HEK293 (cell line): ENCODE measurements at regions of chr2 and their contacts with region 1.

Region 1: DNA sequence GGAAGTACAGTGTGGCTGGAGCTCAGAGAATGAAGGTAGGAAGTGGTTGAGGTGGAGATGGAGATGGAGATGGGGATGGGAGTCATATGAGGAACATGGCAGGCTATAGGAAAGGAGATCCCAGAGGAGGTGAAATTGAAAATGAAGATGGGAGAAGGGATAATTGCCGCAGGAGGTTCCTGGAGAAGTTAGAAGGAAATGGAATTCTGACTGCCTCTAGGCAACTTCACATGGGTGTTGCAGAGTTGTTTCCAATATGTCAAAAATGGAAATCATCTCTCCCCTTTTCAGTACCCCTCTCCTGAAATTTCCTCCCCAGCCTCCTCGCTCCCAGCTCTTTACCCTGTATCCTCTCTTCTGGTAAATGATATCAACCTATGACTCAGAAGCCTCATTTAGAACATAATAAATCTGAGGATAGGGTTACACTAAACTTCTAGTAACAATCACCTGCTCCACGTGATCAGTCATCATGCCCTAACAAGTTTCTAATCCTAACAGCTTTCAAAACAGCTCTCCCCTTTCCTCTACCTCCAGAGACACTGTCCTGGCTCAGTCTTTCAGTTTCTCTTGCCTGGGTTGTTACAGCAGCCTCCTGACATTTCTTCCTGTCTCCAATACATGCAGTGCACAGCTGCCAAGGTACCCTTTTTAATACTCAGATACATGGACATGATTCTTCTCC is 201.9 kb upstream of the RBMS1 start:
- H3K4me3 ChIP-seq: no peak overlapping the region
- H3K27ac ChIP-seq: peak overlapping the region; percentile 48; the same call in 1 of the 2 replicates
- H3K4me1 ChIP-seq: no peaks in the 10 kb centered on the region; the same call in 1 of the 2 replicates
- CTCF ChIP-seq: no peak

Region 2: GRCh38 chr2:160664603-160665140 is 30.9 kb before region 1 on chr2:
- CTCF ChIA-PET with region 1: interaction called, 10 read pairs
- POLR2A ChIA-PET with region 1: no interaction called
- H3K4me3 ChIP-seq: no peak overlapping the region
- H3K27ac ChIP-seq: no peak overlapping the region
- H3K4me1 ChIP-seq: peaks cover 8% of the 10 kb centered on the region; the same call in 1 of the 2 replicates
- CTCF ChIP-seq: no peak

Region 3: DNA sequence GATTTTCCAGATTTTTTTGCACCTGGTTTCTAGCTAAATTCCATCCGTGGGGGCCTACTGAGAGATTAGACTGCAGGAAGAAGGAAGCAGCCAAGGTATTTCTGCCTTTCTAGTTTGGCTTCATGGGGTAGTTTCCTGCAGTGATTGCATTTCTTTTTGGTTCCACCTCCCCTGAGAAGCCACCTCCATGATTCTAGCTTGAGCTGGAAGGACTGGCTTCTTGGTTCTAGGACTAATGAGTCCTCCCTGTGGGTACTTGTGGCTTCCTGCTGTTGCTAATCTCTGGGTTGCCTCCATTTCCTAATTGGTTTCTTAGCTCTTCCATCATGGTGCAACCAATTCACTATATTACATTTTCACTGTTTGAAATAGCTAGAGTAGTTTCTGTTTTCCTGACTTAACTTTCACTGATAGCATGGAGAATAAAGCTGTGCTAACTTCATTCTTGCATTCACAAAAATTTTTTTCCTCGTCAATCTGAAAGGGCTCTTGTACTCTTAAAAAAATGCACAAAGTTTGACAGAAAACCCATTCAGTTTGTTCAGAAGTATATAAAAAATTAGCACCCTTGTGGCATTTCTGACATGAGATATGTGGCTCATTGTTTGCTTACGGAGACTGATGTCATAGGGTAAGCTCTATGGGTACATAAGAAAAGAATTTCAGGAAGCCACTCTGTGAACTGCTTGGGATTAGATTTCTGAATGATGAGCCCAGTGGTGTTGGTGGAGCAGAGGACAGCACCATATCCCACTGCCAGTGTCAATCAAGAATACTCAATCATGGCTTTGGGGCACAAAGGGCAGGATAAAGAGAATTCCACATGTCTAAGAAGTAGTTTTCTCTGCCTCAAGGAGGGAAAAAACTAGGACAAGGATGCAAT is 40.8 kb after region 1 on chr2:
- CTCF ChIA-PET with region 1: no interaction called
- POLR2A ChIA-PET with region 1: no interaction called
- H3K4me3 ChIP-seq: no peak overlapping the region
- H3K27ac ChIP-seq: no peak overlapping the region
- H3K4me1 ChIP-seq: no peaks in the 10 kb centered on the region; the same call in 1 of the 2 replicates
- CTCF ChIP-seq: no peak

Region 4: GRCh38 chr2:160752496-160753330 is 57.2 kb after region 1 on chr2:
- CTCF ChIA-PET with region 1: no interaction called
- POLR2A ChIA-PET with region 1: no interaction called
- H3K4me3 ChIP-seq: no peak overlapping the region
- H3K27ac ChIP-seq: no peak overlapping the region
- H3K4me1 ChIP-seq: no peaks in the 10 kb centered on the region
- CTCF ChIP-seq: no peak